ENCODE measurements at regions of chr15 and their contacts with region 1.

Region 1: GRCh38 chr15:52568601-52569256 is at the start of gene ARPP19:
- DNase-seq: peak; percentile 90 to 95
- ATAC-seq: peak; percentile 95
- H3K4me3 ChIP-seq: peak within 1 kb of the TSS; percentile 64 to 90
- H3K27ac ChIP-seq: peak within 1 kb of the TSS; percentile 76 to 79
- H3K4me1 ChIP-seq: peaks cover 2 to 5% of the 10 kb centered on the region in 2 donors
- H3K27me3 ChIP-seq: no peaks in the 10 kb centered on the region
- total RNA-seq, gene ARPP19: 129 to 163 TPM

Region 2: GRCh38 chr15:52256366-52256765 is 312.4 kb before region 1 on chr15:
- intact Hi-C with region 1: loop called in 1 of 2 experiments (anchors 10 kb)
- DNase-seq: peak; percentile 70 to 84
- ATAC-seq: peak; percentile 81
- H3K4me3 ChIP-seq: no peak overlapping the region
- H3K27ac ChIP-seq: no peak overlapping the region
- H3K4me1 ChIP-seq: peaks cover 0 to 2% of the 10 kb centered on the region in 2 donors
- H3K27me3 ChIP-seq: no peaks in the 10 kb centered on the region

Region 3: DNA sequence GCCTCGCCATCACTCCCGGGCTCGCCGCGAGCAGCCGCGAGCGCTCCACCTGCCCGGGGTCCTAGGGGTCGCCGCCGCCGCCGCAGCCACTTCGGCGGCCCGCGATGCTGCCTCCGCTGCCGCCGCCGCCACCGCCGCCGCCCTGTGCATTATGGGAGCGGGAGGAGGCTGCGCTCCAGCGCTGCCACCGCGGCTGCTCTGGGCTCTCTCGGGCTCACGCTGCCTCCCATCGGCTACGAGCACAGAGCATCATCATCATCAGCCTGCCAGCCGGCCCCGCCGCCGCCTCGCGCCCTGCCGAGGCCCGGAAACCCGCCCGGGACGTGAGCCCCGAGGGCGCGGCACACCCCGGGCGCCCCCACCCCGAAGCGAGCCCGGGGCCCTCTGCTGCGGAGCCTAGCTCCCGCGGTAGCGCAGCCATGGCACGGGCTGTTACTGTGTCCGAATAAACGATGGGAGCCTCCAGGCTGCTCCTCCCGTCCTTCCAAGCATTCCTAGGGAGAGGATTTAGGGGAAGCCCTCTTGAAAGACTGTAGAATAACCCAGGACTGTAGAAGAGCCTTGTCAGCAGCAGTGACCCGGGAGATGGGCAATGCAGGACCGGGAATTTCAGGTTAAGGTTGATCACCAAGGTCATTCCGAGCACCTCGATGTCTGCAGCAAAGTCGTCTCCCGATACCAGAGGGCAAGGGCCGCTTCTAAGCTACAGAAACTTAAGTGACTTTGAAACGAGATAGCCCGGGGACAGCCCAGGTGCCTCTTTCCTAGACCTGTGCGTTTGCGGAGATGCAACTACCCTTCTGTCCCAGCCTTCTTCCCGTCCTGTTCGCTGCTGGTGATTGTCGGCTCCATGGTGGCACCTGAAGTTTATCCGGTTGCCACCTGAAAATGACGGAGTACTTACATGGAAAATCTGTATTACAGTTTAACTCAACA is 39.5 kb before region 1 on chr15:
- intact Hi-C with region 1: loop called in 1 of 2 experiments (anchors 5 kb)
- DNase-seq: peak; percentile 87 to 89
- ATAC-seq: peak; percentile 82
- H3K4me3 ChIP-seq: peak overlapping the region; percentile 82 to 92
- H3K27ac ChIP-seq: peak overlapping the region in 1 of 2 donors; percentile 62
- H3K4me1 ChIP-seq: no peaks in the 10 kb centered on the region
- H3K27me3 ChIP-seq: no peaks in the 10 kb centered on the region

Region 4: DNA sequence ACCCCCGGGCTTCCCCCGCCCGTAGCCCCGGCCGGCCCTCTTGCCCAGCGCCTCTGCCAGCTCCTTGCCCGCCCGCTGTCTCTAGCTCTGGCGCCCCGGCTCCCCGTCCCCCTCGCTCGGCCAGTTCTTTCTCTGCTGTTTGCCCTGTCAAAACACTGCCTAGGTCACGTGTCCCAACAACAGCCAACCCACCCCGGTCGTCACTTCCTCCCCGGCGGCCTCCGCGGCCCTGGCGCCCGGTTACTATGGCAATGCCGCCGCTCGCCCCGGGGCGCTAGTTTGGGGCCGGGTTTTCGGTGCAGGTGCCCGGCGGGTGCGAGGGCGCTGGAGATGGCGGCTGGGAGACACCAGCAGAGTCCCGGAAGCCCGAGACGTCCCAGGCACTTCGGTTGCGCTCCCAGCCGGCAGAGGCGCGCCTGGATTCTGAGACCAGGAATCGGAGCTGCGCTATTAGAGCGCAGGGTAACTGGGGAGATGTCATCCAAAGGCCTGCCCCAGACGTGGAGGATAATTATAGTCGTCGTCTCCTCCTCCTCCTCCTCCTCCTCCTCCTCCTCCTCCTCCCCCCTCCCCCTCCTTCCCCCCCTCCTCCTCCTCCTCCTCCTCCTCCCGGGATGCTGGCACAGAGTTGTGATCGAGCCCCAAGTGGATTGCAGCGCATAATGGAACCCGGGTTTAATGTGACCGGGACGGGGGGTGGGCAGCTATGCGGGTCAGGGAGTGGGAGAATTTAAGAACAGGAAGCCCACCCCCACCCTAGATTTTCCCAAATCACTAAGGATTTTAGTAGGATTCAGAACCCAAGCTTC is 110.7 kb after region 1 on chr15 and contains the start of gene ATOSA:
- intact Hi-C with region 1: loop called in 1 of 2 experiments (anchors 5 kb)
- DNase-seq: peak; percentile 95 to 97
- ATAC-seq: peak; percentile 96
- H3K4me3 ChIP-seq: peak within 1 kb of the TSS; percentile 36 to 74
- H3K27ac ChIP-seq: peak within 1 kb of the TSS; percentile 62 to 71
- H3K4me1 ChIP-seq: no peaks in the 10 kb centered on the region
- H3K27me3 ChIP-seq: no peaks in the 10 kb centered on the region
- total RNA-seq, gene ATOSA: 38.6 to 48.0 TPM